Calu3 (cell line): ENCODE measurements at regions of chr1 and their contacts with region 1.

Region 1: DNA sequence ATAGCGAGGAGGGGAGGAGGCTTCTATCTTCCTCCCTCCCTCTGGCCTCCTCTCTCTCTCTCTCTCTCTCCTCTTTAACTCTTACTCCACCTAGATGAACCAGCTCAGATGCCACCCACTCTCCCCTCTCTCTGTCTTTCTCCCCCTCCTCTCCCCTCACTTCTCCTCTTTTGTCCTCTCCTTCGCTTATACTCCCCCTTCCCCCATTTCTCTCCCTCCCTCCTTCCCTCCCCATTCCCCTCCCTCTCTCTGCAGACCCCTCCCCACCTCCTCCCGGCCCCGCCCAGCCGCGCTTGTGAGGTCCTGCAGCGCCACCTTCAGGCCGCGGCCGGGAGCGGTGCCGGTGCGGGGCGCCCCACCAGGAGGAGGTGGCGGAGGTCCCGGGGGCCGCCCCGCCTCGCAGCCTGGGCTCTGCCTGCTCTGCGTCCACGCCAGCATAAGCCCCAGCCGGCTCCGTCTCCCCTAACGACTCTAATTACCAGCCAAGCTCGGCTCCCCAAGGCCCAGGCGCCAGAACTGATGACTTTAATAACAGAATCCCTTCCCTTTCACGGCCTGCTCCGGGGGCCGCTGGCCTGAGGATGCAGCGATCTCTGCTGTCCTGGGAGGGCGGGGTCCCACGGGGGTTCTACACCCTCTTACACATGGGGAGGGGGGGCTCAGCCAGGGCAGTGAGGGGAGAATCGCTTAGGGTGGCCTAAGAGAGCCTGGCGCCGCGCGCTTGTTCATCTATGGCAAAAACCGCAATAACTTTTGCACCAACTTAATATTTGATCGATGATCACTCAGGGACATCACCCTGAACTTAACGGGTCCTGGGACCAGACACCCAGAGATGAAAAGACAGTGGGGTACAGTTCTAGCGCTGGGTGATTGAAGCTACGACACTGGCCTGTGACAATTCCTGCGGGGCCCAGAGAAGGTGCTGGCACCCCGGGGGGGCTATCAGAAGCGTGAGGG is 637.3 kb downstream of the MATN1 start:
- DNase-seq: peak; percentile 42
- H3K4me3 Mint-ChIP-seq: no peak overlapping the region
- H3K27ac Mint-ChIP-seq: no peak overlapping the region
- H3K4me1 Mint-ChIP-seq: peaks cover 19% of the 10 kb centered on the region
- H3K27me3 Mint-ChIP-seq: peaks cover 14% of the 10 kb centered on the region
- CTCF ChIP-seq: peak; percentile 82

Region 2: GRCh38 chr1:29912425-29912824 is 173.7 kb before region 1 on chr1:
- CTCF ChIA-PET with region 1: no interaction called
- intact Hi-C with region 1: loop called (anchors 1 kb)
- DNase-seq: peak; percentile 51
- H3K4me3 Mint-ChIP-seq: no peak overlapping the region
- H3K27ac Mint-ChIP-seq: no peak overlapping the region
- H3K4me1 Mint-ChIP-seq: no peaks in the 10 kb centered on the region
- H3K27me3 Mint-ChIP-seq: peaks cover 60% of the 10 kb centered on the region
- CTCF ChIP-seq: peak; percentile 29

Region 3: GRCh38 chr1:29975036-29975694 is 110.9 kb before region 1 on chr1:
- CTCF ChIA-PET with region 1: no interaction called
- intact Hi-C with region 1: loop called (anchors 10 kb)
- DNase-seq: peak; percentile 53
- H3K4me3 Mint-ChIP-seq: no peak overlapping the region
- H3K27ac Mint-ChIP-seq: peak overlapping the region; percentile 86
- H3K4me1 Mint-ChIP-seq: peaks cover 46% of the 10 kb centered on the region
- H3K27me3 Mint-ChIP-seq: peaks cover 16% of the 10 kb centered on the region
- CTCF ChIP-seq: no peak

Region 4: DNA sequence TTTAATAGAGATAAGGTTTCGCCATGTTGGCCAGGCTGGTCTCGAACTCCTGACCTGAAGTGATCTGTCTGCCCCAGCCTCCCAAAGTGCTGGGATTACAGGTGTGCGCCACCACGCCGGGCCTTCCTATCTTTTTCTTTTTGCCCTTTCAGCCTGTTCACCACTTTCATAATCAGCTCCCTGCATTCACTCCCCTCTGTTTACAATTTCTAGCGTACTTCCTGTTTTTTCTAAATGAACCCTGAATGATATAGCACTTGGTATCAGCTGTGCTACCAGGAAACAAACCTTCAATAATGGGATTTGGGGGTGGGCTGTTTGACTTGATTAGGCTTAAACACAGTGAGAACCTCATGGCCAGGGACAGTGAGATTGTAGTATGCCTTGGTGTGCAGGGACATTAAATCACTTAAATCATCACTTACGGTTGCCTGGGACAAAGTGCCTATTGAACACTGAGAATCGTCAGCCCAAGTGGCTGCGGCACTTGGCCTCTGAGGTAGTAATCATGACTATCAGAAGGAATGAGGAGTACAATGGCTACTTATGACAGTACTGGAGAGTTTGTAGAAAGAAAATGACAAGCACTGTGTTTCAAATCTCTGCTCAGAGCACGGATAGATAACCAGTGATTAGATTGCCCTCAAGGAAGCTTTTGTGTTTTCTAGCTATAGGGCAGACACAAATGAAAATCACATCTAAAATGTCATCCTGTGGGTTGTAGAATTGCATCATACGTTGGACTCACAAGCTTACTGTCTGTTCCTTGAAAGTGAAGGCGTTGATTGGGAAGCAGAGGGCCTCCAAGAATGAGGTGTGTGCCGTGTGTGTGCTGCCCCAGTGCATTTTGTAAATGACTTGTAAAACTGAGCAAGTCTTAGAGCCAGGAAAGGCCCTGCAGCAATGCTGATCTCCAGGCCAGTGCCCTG is 24.5 kb before region 1 on chr1:
- CTCF ChIA-PET with region 1: no interaction called
- intact Hi-C with region 1: no loop called
- DNase-seq: no peak
- H3K4me3 Mint-ChIP-seq: no peak overlapping the region
- H3K27ac Mint-ChIP-seq: no peak overlapping the region
- H3K4me1 Mint-ChIP-seq: peaks cover 13% of the 10 kb centered on the region
- H3K27me3 Mint-ChIP-seq: peaks cover 10% of the 10 kb centered on the region
- CTCF ChIP-seq: no peak

Region 5: GRCh38 chr1:30120245-30121000 is 34.3 kb after region 1 on chr1:
- CTCF ChIA-PET with region 1: no interaction called
- intact Hi-C with region 1: no loop called
- DNase-seq: no peak
- H3K4me3 Mint-ChIP-seq: no peak overlapping the region
- H3K27ac Mint-ChIP-seq: no peak overlapping the region
- H3K4me1 Mint-ChIP-seq: no peaks in the 10 kb centered on the region
- H3K27me3 Mint-ChIP-seq: peaks cover 88% of the 10 kb centered on the region
- CTCF ChIP-seq: no peak